ENCODE measurements at regions of chr2 and their contacts with region 1.

Region 1: GRCh38 chr2:26846328-26847306 is 1.3 kb upstream of the DPYSL5 start:
- DNase-seq: peak; percentile 77
- ATAC-seq: peak; percentile 81
- H3K4me3 Mint-ChIP-seq: peak overlapping the region; percentile 35
- H3K27ac Mint-ChIP-seq: no peak overlapping the region
- H3K4me1 Mint-ChIP-seq: peaks cover 9% of the 10 kb centered on the region
- H3K27me3 Mint-ChIP-seq: peaks cover 46% of the 10 kb centered on the region
- CTCF ChIP-seq: peak; percentile 80

Region 2: GRCh38 chr2:26785431-26786206 is 61.0 kb before region 1 on chr2 and contains the start of gene CENPA:
- CTCF ChIA-PET with region 1: no interaction called
- POLR2A ChIA-PET with region 1: no interaction called
- intact Hi-C with region 1: no loop called
- DNase-seq: peak; percentile 98
- ATAC-seq: peak; percentile 100
- H3K4me3 Mint-ChIP-seq: peak within 1 kb of the TSS; percentile 84
- H3K27ac Mint-ChIP-seq: peak within 1 kb of the TSS; percentile 85
- H3K4me1 Mint-ChIP-seq: peaks cover 12% of the 10 kb centered on the region
- H3K27me3 Mint-ChIP-seq: peaks cover 17% of the 10 kb centered on the region
- CTCF ChIP-seq: no peak
- total RNA-seq, gene CENPA: 32.5 to 33.6 TPM

Region 3: DNA sequence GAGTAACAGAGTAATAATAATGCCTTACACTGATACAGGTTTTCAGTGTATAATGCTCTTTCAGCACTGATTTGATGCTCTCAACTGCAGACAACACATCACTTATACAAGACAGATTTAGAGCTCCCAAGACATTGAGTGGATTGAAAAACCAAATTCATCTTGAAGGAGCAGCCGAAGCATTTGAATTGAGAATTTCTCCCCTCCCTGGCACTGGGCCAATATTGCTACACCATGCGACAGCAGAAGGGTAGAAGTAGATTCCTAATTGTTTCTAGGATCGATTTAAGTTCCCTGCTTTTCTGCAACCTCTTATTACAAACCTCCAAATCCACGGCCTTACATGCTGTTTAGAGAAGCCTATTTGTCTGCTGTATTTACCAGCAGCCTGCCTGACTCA is 45.3 kb before region 1 on chr2:
- CTCF ChIA-PET with region 1: no interaction called
- POLR2A ChIA-PET with region 1: no interaction called
- intact Hi-C with region 1: no loop called
- DNase-seq: no peak
- ATAC-seq: no peak
- H3K4me3 Mint-ChIP-seq: no peak overlapping the region
- H3K27ac Mint-ChIP-seq: no peak overlapping the region
- H3K4me1 Mint-ChIP-seq: no peaks in the 10 kb centered on the region
- H3K27me3 Mint-ChIP-seq: no peaks in the 10 kb centered on the region
- CTCF ChIP-seq: no peak

Region 4: DNA sequence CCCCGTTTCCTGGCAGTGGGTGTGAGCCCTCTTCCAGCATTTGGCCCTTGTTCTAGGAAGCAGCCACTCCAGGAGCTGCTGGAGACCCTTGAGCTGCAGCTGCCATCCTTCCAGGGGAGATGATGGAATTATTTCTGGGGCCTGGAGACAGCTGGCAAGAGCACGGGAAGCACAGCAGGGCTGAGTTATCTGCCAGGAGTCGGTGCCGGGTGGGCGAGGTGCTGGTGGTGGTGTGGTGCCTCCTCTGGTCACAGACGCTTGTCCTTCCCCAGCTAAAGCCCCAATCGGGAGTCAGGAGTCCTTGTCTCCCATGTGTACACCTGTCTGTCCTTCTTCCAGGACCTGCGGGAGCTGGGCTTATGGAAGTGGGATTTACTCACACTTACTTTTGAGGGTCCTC is 37.3 kb after region 1 on chr2:
- CTCF ChIA-PET with region 1: interaction called, 11 read pairs
- POLR2A ChIA-PET with region 1: no interaction called
- intact Hi-C with region 1: no loop called
- DNase-seq: no peak
- ATAC-seq: no peak
- H3K4me3 Mint-ChIP-seq: no peak overlapping the region
- H3K27ac Mint-ChIP-seq: no peak overlapping the region
- H3K4me1 Mint-ChIP-seq: no peaks in the 10 kb centered on the region
- H3K27me3 Mint-ChIP-seq: peaks cover 13% of the 10 kb centered on the region
- CTCF ChIP-seq: no peak

Region 5: GRCh38 chr2:26911911-26912861 is 65.6 kb after region 1 on chr2:
- CTCF ChIA-PET with region 1: interaction called, 11 read pairs
- POLR2A ChIA-PET with region 1: no interaction called
- intact Hi-C with region 1: no loop called
- DNase-seq: no peak
- ATAC-seq: no peak
- H3K4me3 Mint-ChIP-seq: no peak overlapping the region
- H3K27ac Mint-ChIP-seq: no peak overlapping the region
- H3K4me1 Mint-ChIP-seq: no peaks in the 10 kb centered on the region
- H3K27me3 Mint-ChIP-seq: peaks cover 11% of the 10 kb centered on the region
- CTCF ChIP-seq: no peak

Region 6: GRCh38 chr2:26933431-26934334 is 87.1 kb after region 1 on chr2:
- CTCF ChIA-PET with region 1: interaction called, 156 read pairs
- POLR2A ChIA-PET with region 1: no interaction called
- intact Hi-C with region 1: no loop called
- DNase-seq: no peak
- ATAC-seq: no peak
- H3K4me3 Mint-ChIP-seq: no peak overlapping the region
- H3K27ac Mint-ChIP-seq: no peak overlapping the region
- H3K4me1 Mint-ChIP-seq: no peaks in the 10 kb centered on the region
- H3K27me3 Mint-ChIP-seq: no peaks in the 10 kb centered on the region
- CTCF ChIP-seq: no peak

Region 7: GRCh38 chr2:26952374-26952773 is 105.8 kb after region 1 on chr2:
- CTCF ChIA-PET with region 1: interaction called, 20 read pairs
- POLR2A ChIA-PET with region 1: no interaction called
- intact Hi-C with region 1: no loop called
- DNase-seq: no peak
- ATAC-seq: no peak
- H3K4me3 Mint-ChIP-seq: no peak overlapping the region
- H3K27ac Mint-ChIP-seq: no peak overlapping the region
- H3K4me1 Mint-ChIP-seq: no peaks in the 10 kb centered on the region
- H3K27me3 Mint-ChIP-seq: peaks cover 12% of the 10 kb centered on the region
- CTCF ChIP-seq: no peak

Region 8: DNA sequence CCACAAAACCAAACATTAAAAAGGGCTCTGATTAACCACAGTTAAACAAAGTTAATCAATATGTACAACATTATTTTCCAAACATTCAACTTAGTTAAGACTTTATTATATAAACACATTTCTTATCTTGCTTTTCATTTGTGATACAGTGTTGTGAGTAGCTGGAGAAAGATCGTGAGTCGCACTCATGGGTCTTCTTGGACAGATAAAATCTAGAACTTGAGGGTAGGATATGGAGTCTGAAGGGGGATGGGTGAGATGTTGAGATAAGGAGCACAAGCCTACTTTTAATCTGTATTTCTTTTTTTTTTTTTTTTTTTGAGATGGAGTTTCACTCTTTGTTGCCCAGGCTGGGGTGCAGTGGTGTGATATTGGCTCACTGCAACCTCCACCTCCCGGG is 163.5 kb after region 1 on chr2:
- CTCF ChIA-PET with region 1: interaction called, 13 read pairs
- POLR2A ChIA-PET with region 1: no interaction called
- intact Hi-C with region 1: loop called (anchors 10 kb)
- DNase-seq: no peak
- ATAC-seq: no peak
- H3K4me3 Mint-ChIP-seq: no peak overlapping the region
- H3K27ac Mint-ChIP-seq: no peak overlapping the region
- H3K4me1 Mint-ChIP-seq: peaks cover 2% of the 10 kb centered on the region
- H3K27me3 Mint-ChIP-seq: peaks cover 1% of the 10 kb centered on the region
- CTCF ChIP-seq: no peak